PC-9 (cell line): ENCODE measurements at regions of chr9 and their contacts with region 1.

Region 1: DNA sequence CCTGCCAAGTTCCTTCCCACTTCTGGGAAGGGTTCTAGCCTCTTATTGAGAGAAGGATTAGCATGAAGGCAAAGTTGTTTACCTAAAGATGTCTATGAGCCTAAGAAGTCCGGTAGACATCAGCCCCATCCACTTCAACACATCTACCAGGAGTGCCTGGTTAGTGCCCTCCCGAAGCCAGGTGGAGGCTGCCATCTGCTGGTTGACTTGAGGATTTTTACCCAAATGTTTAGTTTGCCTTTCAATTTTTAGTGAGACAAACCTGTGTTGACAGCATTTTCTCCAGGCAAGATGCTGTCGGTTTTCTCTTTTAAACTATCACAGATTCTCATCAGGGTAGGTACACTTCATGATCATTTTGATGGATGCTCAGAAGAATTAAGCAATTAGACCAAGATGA is 83.6 kb upstream of the TNFSF8 start:
- DNase-seq: peak; percentile 45 to 69
- H3K4me3 ChIP-seq: no peak overlapping the region
- H3K27ac ChIP-seq: no peak overlapping the region
- H3K4me1 ChIP-seq: no peaks in the 10 kb centered on the region
- H3K27me3 ChIP-seq: peaks cover 23% of the 10 kb centered on the region; the same call in 1 of the 2 replicates
- CTCF ChIP-seq: peak; percentile 94

Region 2: DNA sequence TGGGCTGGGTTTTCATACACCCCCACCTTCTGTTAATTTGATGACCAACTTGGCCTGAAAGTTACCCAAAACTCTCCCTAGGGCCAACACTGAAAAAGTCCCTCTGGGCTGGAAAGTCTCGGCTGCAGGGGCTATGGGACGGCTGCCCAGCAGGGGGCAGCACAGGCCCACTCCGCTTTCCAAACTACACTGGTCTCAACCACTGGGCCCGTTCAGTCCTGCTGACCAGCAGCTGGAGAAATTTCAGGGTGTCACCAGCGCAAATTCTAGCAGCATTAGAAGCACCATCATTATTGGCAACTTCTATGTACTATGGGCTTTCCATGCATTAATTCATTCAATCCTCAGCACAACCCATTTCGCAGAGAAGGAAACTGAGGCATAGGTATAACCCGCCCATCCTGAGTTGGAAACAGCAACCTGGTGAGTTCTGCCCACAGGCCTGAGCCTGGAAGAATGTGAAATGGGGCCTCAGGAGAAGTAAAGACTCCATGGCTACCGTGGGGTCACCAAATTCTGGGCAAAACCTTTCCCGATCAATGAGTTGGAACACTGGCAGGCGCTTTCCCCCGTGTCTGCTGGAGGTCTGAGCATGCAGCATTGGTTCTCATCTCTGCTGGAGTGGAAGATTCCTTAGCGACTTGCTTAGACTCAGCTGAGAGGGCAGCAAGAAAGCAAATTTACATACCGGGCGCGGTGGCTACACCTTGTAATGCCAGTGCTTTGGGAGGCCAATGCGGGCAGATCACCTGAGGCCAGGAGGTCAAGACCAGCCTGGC is 674.7 kb before region 1 on chr9:
- CTCF ChIA-PET with region 1: no interaction called
- POLR2A ChIA-PET with region 1: no interaction called
- intact Hi-C with region 1: loop called (anchors 1 kb)
- DNase-seq: peak in 1 of 2 experiments; percentile 57
- H3K4me3 ChIP-seq: no peak overlapping the region
- H3K27ac ChIP-seq: no peak overlapping the region
- H3K4me1 ChIP-seq: no peaks in the 10 kb centered on the region
- H3K27me3 ChIP-seq: no peaks in the 10 kb centered on the region
- CTCF ChIP-seq: peak; percentile 90

Region 3: DNA sequence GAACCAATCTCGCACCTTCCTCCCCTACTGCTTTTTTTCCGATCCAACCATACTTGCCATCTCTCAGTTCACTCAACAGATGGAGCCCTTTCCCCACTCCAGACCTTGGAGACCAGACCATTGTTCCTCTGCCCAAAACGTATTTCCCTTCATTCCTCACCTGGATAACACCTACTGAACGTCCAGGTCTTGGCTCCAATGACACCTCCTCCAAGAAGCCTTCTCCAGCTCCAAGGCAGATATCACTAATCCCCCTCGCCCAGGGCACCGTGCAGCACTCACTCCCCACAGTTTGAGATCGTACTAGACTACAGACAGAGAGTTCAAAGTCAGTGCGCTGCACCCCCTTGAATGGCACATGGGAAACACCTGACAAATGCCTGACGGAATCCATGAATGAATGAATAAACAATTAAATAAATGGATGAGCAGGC is 579.1 kb before region 1 on chr9:
- CTCF ChIA-PET with region 1: no interaction called
- POLR2A ChIA-PET with region 1: no interaction called
- intact Hi-C with region 1: loop called (anchors 1 kb)
- DNase-seq: peak; percentile 40 to 43
- H3K4me3 ChIP-seq: no peak overlapping the region
- H3K27ac ChIP-seq: no peak overlapping the region
- H3K4me1 ChIP-seq: no peaks in the 10 kb centered on the region
- H3K27me3 ChIP-seq: no peaks in the 10 kb centered on the region
- CTCF ChIP-seq: peak; percentile 80

Region 4: DNA sequence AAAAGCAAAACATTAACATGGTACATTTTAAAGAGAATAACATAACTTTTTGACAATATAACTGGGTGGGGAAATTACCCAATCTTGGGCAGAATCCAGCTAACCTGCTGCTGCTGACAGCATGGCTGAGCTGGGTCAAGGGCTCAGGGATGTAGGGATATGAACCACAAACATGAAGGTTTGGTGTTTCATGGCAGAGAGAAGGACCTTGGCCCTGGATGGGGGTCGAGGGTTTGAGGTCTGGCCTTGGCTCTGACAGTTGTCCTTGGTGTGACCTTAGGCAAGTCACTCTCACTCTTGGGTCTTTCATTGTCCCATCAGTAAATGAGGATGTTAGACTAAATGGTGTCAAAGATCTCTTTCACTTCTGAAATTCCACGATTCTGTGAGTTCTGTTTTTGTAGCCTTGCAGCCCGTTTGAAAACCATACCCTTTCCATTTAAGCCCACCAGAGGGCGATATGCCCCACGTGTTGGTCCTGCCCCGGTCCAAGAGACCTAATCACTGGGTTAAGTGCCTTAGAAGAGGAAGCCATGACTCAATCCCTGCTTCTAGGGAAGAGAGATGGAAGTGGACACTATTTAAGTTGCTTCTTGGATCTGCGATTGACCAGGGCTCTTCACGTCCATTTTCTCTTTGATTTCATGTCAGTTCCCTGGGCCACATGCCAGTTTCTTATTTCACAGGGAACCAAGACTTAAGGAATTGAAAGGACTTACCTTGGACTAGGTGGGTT is 275.2 kb before region 1 on chr9:
- CTCF ChIA-PET with region 1: no interaction called
- POLR2A ChIA-PET with region 1: no interaction called
- intact Hi-C with region 1: loop called (anchors 1 kb)
- DNase-seq: peak; percentile 68 to 69
- H3K4me3 ChIP-seq: no peak overlapping the region
- H3K27ac ChIP-seq: no peak overlapping the region
- H3K4me1 ChIP-seq: peaks cover 19% of the 10 kb centered on the region
- H3K27me3 ChIP-seq: no peaks in the 10 kb centered on the region
- CTCF ChIP-seq: peak; percentile 92

Region 5: GRCh38 chr9:115183436-115183835 is 169.4 kb after region 1 on chr9:
- CTCF ChIA-PET with region 1: interaction called, 10 read pairs
- POLR2A ChIA-PET with region 1: no interaction called
- intact Hi-C with region 1: no loop called
- DNase-seq: no peak
- H3K4me3 ChIP-seq: no peak overlapping the region
- H3K27ac ChIP-seq: no peak overlapping the region
- H3K4me1 ChIP-seq: no peaks in the 10 kb centered on the region
- H3K27me3 ChIP-seq: no peaks in the 10 kb centered on the region
- CTCF ChIP-seq: no peak

Region 6: GRCh38 chr9:115524453-115525059 is 510.6 kb after region 1 on chr9:
- CTCF ChIA-PET with region 1: no interaction called
- POLR2A ChIA-PET with region 1: no interaction called
- intact Hi-C with region 1: loop called (anchors 2 kb)
- DNase-seq: peak; percentile 30 to 60
- H3K4me3 ChIP-seq: no peak overlapping the region
- H3K27ac ChIP-seq: no peak overlapping the region
- H3K4me1 ChIP-seq: no peaks in the 10 kb centered on the region
- H3K27me3 ChIP-seq: no peaks in the 10 kb centered on the region
- CTCF ChIP-seq: peak; percentile 84